Activated T-helper 1 cell treated with anti-CD3 and anti-CD28 coated beads, Interleukin-12 subunit alpha, Interleukin-12 subunit beta, Interleukin-2, Interleukin-4 antibody, amounts not matched to agents 30 ng/mL and 10 ng/mL and 1 ng/mL, durations not matched to agents 14 hours and 24 hours and 36 hours (primary cell): ENCODE measurements at regions of chr10 and their contacts with region 1.

Region 1: DNA sequence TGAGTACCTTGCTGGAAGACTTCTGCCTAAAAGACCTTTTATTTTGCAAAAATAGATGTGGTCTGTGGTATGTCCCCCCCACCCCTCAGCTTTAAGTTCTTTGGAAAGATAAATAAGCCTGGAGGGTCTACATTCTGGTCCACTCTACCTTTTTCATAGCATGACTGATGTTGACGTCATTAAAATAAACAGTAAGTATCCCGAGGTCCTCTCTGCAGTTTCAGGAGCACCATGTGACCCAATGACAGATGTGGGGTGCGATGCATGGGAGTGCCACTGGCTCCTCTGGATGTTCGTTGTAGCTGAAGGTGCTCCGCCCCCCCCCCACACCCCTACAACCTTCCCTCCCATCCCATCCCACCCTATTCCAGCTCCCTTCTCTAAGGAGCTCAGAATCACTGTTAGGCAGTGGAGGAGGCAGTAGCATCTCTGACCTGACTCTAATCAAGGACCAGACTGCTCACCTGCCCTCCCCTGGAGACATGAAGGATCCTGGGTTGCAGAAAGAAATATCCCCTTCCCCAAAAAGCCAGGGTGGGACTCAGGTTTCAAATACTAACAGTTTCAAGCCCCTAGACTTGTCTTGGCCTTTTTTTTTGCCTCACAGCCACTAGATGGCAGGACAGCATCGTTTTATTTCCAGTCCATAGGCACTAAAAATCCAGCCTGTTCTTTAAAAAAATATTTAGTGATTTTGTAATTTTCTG is 25.1 kb downstream of the CASP7 start:
- DNase-seq: no peak
- H3K4me3 Mint-ChIP-seq: no peak overlapping the region
- H3K27ac Mint-ChIP-seq: no peak overlapping the region
- H3K4me1 Mint-ChIP-seq: peaks cover 28% of the 10 kb centered on the region
- H3K27me3 Mint-ChIP-seq: no peaks in the 10 kb centered on the region

Region 2: GRCh38 chr10:113780681-113781250 is 76.0 kb after region 1 on chr10:
- intact Hi-C with region 1: loop called (anchors 2 kb)
- DNase-seq: no peak
- H3K4me3 Mint-ChIP-seq: no peak overlapping the region
- H3K27ac Mint-ChIP-seq: no peak overlapping the region
- H3K4me1 Mint-ChIP-seq: no peaks in the 10 kb centered on the region
- H3K27me3 Mint-ChIP-seq: peaks cover 13% of the 10 kb centered on the region

Region 3: GRCh38 chr10:113802997-113803396 is 98.2 kb after region 1 on chr10:
- intact Hi-C with region 1: loop called (anchors 1 kb)
- DNase-seq: no peak
- H3K4me3 Mint-ChIP-seq: no peak overlapping the region
- H3K27ac Mint-ChIP-seq: no peak overlapping the region
- H3K4me1 Mint-ChIP-seq: no peaks in the 10 kb centered on the region
- H3K27me3 Mint-ChIP-seq: peaks cover 42% of the 10 kb centered on the region

Region 4: DNA sequence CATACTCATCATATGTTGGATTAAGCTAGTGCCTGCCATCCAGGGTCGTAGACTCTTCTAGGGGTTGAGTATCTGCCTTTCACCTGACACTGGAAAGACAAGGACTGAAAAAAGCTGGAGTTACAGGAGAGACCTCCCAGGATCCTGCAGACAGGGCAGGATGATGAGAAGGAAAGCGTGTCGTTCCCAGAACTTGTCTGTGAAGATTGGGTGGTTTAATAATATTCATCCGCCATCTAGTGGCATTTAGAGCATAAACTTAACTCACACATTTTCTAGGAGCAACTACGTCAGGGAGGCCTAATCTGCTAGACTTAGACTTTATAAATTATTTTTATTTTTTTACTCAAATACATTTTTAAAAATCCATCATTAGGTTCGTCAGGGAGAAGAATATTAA is 398.5 kb after region 1 on chr10:
- intact Hi-C with region 1: loop called (anchors 1 kb)
- DNase-seq: no peak
- H3K4me3 Mint-ChIP-seq: no peak overlapping the region
- H3K27ac Mint-ChIP-seq: no peak overlapping the region
- H3K4me1 Mint-ChIP-seq: peaks cover 21% of the 10 kb centered on the region
- H3K27me3 Mint-ChIP-seq: peaks cover 47% of the 10 kb centered on the region